Endothelial cell of umbilical vein (primary cell): ENCODE measurements at regions of chr6 and their contacts with region 1.

Region 1: DNA sequence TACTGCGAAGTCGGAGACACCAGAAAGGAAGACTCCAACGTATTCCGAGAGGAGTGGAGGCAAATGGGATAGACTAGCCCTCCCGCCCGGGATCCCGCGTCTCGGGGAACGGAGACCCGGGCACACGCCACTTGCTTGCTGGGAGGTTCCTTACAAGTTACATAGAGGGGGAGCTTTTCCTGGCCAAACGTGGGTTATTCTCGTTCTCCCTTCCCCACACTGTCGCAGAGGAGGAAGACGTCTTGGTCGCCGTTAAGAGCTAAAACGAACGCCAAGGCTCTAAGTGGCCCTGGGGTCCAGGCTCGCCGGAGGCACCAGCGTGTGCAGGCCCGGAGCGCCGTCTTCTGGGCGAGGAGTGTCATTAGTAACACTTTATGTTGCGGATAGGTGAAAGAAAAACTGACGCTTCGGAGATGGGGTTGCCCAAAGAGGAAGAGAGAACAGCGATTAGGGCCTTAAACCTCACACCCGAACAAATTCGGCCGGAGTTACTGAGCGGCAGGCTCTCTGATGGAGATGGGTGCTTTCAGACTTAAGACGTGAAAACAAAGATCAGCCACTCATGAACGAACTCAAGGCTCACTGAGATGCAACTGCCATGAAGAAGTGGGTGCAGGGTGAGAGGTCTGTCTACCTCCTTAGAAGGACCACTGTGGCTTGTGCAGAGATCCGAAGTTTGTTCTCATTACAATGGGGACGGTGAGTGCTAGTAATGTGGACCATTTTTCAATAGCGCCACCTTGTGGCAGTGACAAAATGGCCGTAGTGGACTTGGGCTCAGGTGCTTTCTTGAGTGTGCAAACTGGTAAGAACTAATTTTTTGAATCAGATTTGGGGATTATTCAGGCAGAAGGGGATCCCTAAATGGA is 11.7 kb upstream of the ZNF311 start:
- DNase-seq: peak; percentile 86
- H3K4me3 ChIP-seq: peak overlapping the region; percentile 44 to 90 (median 80)
- H3K27ac ChIP-seq: no peak overlapping the region
- H3K4me1 ChIP-seq: peaks cover 9% of the 10 kb centered on the region
- H3K27me3 ChIP-seq: peaks cover 2 to 3% of the 10 kb centered on the region in 2 experiments
- CTCF ChIP-seq: peak; percentile 72 to 78
- POLR2A ChIP-seq: no peak

Region 2: DNA sequence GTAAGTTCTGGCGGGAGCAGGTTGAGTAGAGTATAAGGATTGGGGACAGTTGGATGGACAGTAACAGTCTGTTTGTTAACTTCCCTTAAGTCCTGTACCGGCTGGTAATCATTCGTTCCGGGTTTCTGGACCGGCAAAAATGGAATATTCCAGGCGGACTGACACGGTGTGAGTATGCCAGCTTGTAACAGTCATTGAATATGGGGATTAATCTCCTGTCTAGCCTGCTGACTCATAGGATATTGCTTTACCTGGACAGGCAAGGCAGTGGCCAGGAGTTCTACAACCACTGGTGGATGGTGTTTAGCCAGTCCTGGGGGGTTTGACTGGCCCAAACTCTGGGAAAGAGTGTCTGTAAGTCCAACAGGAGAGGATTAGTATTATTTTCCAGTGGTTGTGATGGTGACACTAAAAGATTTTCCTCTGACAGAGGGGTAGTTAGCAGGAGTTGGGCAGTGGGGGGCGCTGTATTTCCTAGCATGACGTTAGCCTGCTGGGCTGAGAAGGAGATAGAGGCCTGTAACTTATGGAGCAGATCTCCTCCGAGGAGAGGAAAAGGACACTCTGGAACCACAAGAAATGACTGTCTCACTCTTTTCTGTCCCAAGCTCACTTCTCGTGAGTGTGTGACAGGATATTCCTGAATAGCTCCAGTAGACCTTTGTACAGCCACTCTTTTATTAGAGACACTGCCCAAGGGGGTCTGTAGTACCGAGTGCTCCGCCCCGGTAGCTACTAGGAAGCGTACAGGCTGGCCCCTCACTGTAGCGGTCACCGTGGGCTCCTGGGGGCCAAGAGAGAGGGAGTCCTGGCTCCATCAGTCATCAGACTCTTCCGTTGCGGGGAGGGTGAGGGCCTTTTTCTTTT is 245.2 kb before region 1 on chr6:
- CTCF ChIA-PET with region 1: interaction called, 3 read pairs
- POLR2A ChIA-PET with region 1: no interaction called
- dilution Hi-C with region 1: no loop called
- intact Hi-C with region 1: loop called (anchors 1 kb)
- DNase-seq: no peak
- H3K4me3 ChIP-seq: no peak overlapping the region
- H3K27ac ChIP-seq: no peak overlapping the region
- H3K4me1 ChIP-seq: no peaks in the 10 kb centered on the region
- H3K27me3 ChIP-seq: peaks cover 79 to 83% of the 10 kb centered on the region in 2 experiments
- CTCF ChIP-seq: no peak
- POLR2A ChIP-seq: no peak

Region 3: GRCh38 chr6:28923318-28924102 is 93.3 kb before region 1 on chr6 and contains the start of gene TRIM27:
- CTCF ChIA-PET with region 1: interaction called, 7 read pairs
- POLR2A ChIA-PET with region 1: no interaction called
- dilution Hi-C with region 1: no loop called
- intact Hi-C with region 1: loop called (anchors 1 kb)
- DNase-seq: peak; percentile 85
- H3K4me3 ChIP-seq: peak within 1 kb of the TSS; percentile 55 to 90 (median 63)
- H3K27ac ChIP-seq: peak within 1 kb of the TSS; percentile 77
- H3K4me1 ChIP-seq: peaks cover 18% of the 10 kb centered on the region
- H3K27me3 ChIP-seq: no peaks in the 10 kb centered on the region
- CTCF ChIP-seq: no peak
- POLR2A ChIP-seq: peak; percentile 95
- total RNA-seq, gene TRIM27: 67.5 and 69.2 TPM in 2 replicates

Region 4: DNA sequence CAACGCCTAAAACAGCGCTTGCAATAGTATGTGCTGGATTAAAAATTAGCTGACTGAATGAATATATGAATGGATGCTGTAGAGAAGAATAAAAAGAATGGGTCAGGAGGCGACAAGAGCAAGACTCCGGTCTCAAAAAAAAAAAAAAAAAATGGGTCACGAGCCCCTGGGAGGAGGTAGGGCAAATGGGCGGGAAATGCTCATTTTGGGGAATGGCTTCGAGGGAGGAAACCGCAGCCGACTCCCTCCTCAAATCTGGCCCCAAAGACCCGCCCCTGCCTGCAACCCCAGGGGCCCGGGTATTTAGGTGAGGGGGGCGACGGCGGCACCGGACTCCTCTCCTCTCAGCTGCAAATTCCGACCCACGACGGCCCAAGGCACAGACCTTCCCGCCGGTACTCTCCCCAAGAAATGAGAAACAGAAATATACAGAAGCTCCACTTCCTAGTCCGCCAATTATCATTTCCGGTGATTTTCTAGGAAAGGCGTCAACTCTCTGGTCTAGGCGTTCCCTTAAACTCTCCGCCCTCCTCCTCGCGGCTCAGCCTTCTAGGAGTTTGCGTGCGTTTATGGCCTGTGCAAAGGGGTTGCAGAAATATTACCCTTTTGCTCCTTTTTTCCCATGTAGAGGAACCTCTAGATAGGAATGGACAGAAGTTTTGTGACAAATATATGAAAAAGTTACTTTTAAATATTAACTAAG is 11.5 kb before region 1 on chr6 and contains the start of gene ZNF311:
- CTCF ChIA-PET with region 1: interaction called, 10 read pairs
- POLR2A ChIA-PET with region 1: no interaction called
- dilution Hi-C with region 1: no loop called
- intact Hi-C with region 1: no loop called
- DNase-seq: peak; percentile 57
- H3K4me3 ChIP-seq: peak within 1 kb of the TSS; percentile 52 to 75 (median 63)
- H3K27ac ChIP-seq: no peak within 1 kb of the TSS
- H3K4me1 ChIP-seq: peaks cover 5% of the 10 kb centered on the region
- H3K27me3 ChIP-seq: peaks cover 2 to 14% of the 10 kb centered on the region in 2 experiments
- CTCF ChIP-seq: no peak
- POLR2A ChIP-seq: peak; percentile 62
- total RNA-seq, gene ZNF311: 0.35 and 0.55 TPM in 2 replicates

Region 5: DNA sequence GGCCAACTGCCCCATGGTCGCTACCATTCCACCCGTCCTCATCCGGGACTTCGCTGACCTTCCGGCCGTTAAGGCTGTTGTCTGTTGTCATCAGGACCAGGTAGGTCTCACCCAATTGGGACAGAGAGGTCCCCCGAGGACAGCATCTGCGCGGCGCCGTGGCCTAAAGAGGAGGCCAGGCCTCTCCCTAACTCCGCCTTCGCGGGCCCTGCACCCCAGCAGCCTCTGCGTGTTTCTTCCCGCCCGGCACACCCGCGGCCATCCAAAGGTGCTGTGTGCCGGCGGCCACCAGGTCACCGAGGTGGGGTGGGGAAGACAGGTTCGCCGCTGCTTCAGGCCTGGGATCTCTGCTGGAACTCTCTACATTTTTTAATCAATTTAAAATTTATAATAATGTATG is 19.2 kb after region 1 on chr6:
- CTCF ChIA-PET with region 1: no interaction called
- POLR2A ChIA-PET with region 1: no interaction called
- dilution Hi-C with region 1: no loop called
- intact Hi-C with region 1: no loop called
- DNase-seq: no peak
- H3K4me3 ChIP-seq: no peak overlapping the region
- H3K27ac ChIP-seq: no peak overlapping the region
- H3K4me1 ChIP-seq: no peaks in the 10 kb centered on the region
- H3K27me3 ChIP-seq: no peaks in the 10 kb centered on the region
- CTCF ChIP-seq: no peak
- POLR2A ChIP-seq: no peak

Region 6: GRCh38 chr6:29632789-29633533 is 616.2 kb after region 1 on chr6 and contains the start of gene GABBR1:
- CTCF ChIA-PET with region 1: no interaction called
- POLR2A ChIA-PET with region 1: no interaction called
- dilution Hi-C with region 1: no loop called
- intact Hi-C with region 1: loop called (anchors 2 kb)
- DNase-seq: peak; percentile 59
- H3K4me3 ChIP-seq: peak within 1 kb of the TSS; percentile 57 to 73 (median 62)
- H3K27ac ChIP-seq: no peak within 1 kb of the TSS
- H3K4me1 ChIP-seq: peaks cover 28% of the 10 kb centered on the region
- H3K27me3 ChIP-seq: no peaks in the 10 kb centered on the region
- CTCF ChIP-seq: no peak
- POLR2A ChIP-seq: no peak
- total RNA-seq, gene GABBR1: 50.8 and 52.1 TPM in 2 replicates